ENCODE measurements at regions of chr1 and their contacts with region 1.

Region 1: DNA sequence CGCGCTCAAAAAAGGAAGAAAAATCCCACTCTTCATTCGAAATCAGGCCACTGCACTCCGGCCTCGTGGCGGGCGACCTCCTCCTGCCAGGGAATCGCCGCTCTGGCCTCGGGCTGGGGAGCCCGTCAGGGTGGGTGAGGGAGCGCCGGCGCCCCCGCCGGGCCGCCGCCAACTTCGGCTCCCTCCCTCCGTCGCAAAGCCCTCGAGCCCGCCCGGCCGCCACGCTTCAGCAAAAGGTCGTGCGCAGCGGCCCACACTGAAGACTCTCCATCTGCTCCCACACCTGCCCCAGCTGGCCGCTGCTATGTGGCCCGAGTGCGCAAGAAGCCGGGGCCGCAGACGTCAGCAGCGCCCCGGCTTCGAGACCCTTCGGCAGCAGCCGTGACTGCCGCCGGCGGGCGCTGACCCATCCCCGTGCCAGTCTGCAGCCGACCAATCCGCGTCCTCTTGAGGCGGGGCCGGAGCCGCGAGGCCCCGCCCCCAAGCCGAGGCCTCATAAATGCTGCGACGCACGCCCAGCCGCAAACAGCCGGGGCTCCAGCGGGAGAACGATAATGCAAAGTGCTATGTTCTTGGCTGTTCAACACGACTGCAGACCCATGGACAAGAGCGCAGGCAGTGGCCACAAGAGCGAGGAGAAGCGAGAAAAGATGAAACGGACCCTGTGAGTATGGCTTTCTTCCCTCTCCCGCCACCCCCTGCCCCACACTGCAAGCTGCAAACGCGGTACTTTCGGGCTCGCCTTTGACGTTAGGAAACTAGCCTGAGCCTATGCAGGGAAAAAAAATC is at the start of gene RGS2:
- DNase-seq: peak; percentile 74 to 93 (median 85)
- ATAC-seq: peak; percentile 92 to 97 (median 95)
- H3K4me3 ChIP-seq: peak within 1 kb of the TSS; percentile 81 to 87
- H3K4me3 Mint-ChIP-seq: peak within 1 kb of the TSS; percentile 97 to 98 (median 97)
- H3K27ac ChIP-seq: peak within 1 kb of the TSS; percentile 77
- H3K27ac Mint-ChIP-seq: peak within 1 kb of the TSS; percentile 92 to 97
- H3K4me1 ChIP-seq: peaks cover 2 to 18% of the 10 kb centered on the region in 2 experiments
- H3K4me1 Mint-ChIP-seq: peaks cover 33 to 41% (median 34%) of the 10 kb centered on the region in 3 donors
- H3K27me3 ChIP-seq: no peaks in the 10 kb centered on the region
- H3K27me3 Mint-ChIP-seq: no peaks in the 10 kb centered on the region
- total RNA-seq, gene RGS2: 13.9 to 129 (median 20.7) TPM

Region 2: GRCh38 chr1:192794768-192795035 is 14.0 kb before region 1 on chr1:
- CTCF ChIA-PET with region 1: no interaction called
- POLR2A ChIA-PET with region 1: no interaction called
- DNase-seq: no peak
- ATAC-seq: no peak
- H3K4me3 ChIP-seq: no peak overlapping the region
- H3K4me3 Mint-ChIP-seq: no peak overlapping the region
- H3K27ac ChIP-seq: no peak overlapping the region
- H3K27ac Mint-ChIP-seq: no peak overlapping the region
- H3K4me1 ChIP-seq: no peaks in the 10 kb centered on the region
- H3K4me1 Mint-ChIP-seq: no peaks in the 10 kb centered on the region
- H3K27me3 ChIP-seq: peaks cover 0 to 3% of the 10 kb centered on the region in 2 experiments
- H3K27me3 Mint-ChIP-seq: peaks cover 4 to 6% of the 10 kb centered on the region in 2 donors

Region 3: GRCh38 chr1:193019442-193020026 is 210.8 kb after region 1 on chr1:
- CTCF ChIA-PET with region 1: interaction called, 6 to 84 read pairs
- POLR2A ChIA-PET with region 1: interaction called in 1 of 2 experiments, 5 read pairs
- DNase-seq: peak in 2 of 35 experiments; percentile 5 to 61
- ATAC-seq: peak in 2 of 4 experiments; percentile 37 to 43
- H3K4me3 ChIP-seq: no peak overlapping the region
- H3K4me3 Mint-ChIP-seq: no peak overlapping the region
- H3K27ac ChIP-seq: no peak overlapping the region
- H3K27ac Mint-ChIP-seq: no peak overlapping the region
- H3K4me1 ChIP-seq: no peaks in the 10 kb centered on the region
- H3K4me1 Mint-ChIP-seq: peaks cover 0 to 2% (median 0%) of the 10 kb centered on the region in 3 donors
- H3K27me3 ChIP-seq: no peaks in the 10 kb centered on the region
- H3K27me3 Mint-ChIP-seq: no peaks in the 10 kb centered on the region